ENCODE measurements at regions of chr12 and their contacts with region 1.

Region 1: GRCh38 chr12:92551853-92552397 is 150.9 kb upstream of the PLEKHG7 start:
- DNase-seq: no peak
- ATAC-seq: no peak
- H3K4me3 ChIP-seq: no peak overlapping the region
- H3K27ac ChIP-seq: no peak overlapping the region
- H3K4me1 ChIP-seq: no peaks in the 10 kb centered on the region
- H3K27me3 ChIP-seq: no peaks in the 10 kb centered on the region
- CTCF ChIP-seq: no peak

Region 2: DNA sequence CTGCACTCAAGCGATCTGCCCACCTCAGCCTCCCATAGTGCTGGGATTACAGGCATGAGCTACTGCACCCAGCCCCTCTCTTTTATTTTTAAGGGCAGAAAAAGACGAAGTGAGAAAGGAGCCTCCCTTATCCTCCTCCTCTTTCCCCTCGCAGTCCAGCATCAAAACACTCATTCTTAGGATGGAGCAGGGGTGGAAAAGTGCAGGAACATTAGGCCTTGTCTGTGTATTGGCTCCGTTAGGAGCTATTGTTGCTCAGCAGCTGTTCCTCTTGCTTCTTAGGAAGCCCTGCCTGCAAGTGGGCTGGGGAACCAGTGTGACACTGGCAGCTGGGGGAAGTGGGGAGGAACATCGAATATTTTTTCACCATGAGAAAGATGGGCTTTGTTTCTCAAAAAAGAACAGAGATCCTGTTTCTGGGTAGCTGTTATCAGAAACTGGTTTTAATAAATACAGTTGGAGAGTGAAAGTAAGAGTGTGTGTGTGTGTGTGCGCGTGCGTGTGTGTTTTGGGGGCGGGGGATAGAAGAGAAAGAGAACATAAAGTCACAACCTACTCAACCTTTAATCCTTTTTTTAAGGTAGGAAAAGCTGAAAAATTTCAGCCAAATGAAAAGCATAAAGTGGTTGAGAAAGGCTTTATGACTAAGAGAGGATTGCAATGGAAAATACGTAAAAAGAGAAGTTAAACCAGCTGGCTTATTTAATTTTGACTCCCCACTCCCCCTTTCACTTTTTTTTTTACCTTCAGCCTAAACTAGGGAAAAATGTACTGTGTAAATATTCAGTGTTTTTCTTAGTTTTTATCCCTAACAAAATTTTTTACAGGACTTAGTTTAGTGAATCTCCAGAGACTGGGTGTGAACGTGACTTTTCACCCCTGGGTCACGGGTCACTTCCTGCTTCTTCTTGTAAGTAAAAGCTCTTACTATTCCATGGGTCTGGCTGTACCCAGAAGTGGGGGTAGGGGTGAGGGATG is 46.4 kb before region 1 on chr12:
- intact Hi-C with region 1: loop called in 1 of 2 experiments (anchors 5 kb)
- DNase-seq: peak; percentile 47 to 62
- ATAC-seq: peak; percentile 48 to 65 (median 55)
- H3K4me3 ChIP-seq: peak overlapping the region; percentile 38
- H3K27ac ChIP-seq: peak overlapping the region; percentile 71
- H3K4me1 ChIP-seq: peaks cover 34% of the 10 kb centered on the region
- H3K27me3 ChIP-seq: no peaks in the 10 kb centered on the region
- CTCF ChIP-seq: no peak

Measured in psoas muscle (tissue), 8 donors.